Activated CD8-positive, alpha-beta T cell treated with anti-CD3 and anti-CD28 coated beads for 36 hours (primary cell): ENCODE measurements at regions of chr11 and their contacts with region 1.

Region 1: DNA sequence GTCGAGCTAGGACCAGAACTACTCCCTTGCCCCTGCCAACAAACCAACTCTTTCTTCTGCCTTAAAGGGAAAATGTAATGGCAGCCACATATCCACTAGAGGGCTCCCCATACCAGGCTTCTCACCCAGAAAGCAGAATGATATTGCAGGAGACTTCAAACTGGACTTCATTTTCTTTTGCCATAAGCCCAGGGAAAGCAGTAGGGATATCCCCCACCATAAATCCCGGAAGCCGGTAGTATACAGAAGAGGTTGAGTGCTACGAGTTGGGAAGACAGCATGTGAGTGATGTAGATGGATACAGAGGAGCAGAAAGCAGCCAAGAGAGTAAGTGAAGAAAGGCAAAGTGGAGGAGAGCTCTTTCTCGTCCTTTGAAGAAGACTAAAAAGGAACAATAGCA is 12.1 kb downstream of the PLAAT5 start:
- DNase-seq: peak; percentile 57
- ATAC-seq: peak; percentile 86
- H3K4me3 Mint-ChIP-seq: no peak overlapping the region
- H3K27ac Mint-ChIP-seq: no peak overlapping the region
- H3K4me1 Mint-ChIP-seq: no peaks in the 10 kb centered on the region
- H3K27me3 Mint-ChIP-seq: no peaks in the 10 kb centered on the region
- CTCF ChIP-seq: peak; percentile 85

Region 2: DNA sequence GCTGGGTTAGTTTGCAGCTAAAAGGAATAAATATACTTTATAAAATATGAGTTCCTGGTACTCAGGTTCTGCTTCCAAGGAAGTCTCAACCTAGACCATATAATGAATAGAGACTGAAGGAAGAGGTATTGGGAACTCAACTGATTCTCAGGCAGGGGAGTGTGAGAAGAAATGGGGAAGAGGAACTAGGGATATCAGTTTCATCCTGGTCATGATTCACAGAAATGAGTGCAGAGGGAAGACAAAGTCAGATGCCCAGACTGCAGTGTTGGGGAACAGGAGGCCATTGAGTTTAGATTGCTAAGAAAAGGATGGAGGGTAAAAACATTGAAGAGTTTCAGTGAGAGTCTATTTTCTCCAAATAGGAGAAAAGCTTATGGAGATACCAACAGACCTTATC is 16.8 kb before region 1 on chr11:
- CTCF ChIA-PET with region 1: interaction called, 13 read pairs
- POLR2A ChIA-PET with region 1: no interaction called
- intact Hi-C with region 1: no loop called
- DNase-seq: no peak
- ATAC-seq: no peak
- H3K4me3 Mint-ChIP-seq: no peak overlapping the region
- H3K27ac Mint-ChIP-seq: no peak overlapping the region
- H3K4me1 Mint-ChIP-seq: no peaks in the 10 kb centered on the region
- H3K27me3 Mint-ChIP-seq: peaks cover 6% of the 10 kb centered on the region
- CTCF ChIP-seq: no peak

Region 3: DNA sequence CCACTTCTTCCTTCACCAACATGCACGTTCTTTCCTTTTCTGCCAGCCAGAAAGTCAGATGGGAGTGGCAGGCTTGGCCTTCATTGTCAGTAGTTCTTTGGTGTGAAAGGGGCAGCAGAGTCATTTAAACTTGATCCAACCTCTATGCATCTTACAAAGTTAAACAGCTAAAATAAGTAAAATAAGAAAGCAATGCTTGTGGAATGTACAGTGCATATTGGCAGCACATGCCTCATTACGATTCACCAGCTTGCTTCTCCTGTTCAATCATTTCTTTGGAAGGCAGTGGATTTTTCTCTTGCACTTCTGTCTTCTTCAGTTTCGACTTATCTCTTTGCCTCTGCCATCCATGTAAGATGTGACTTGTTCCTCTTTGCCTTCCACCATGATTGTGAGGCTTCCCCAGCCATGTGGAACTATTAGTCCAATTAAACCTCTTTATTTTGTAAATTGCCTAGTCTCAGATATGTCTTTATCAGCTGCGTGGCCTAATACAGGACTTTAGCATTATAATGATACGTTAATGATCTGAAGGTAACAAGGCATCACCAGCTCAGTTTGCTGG is 41.8 kb after region 1 on chr11:
- CTCF ChIA-PET with region 1: interaction called, 11 read pairs
- POLR2A ChIA-PET with region 1: no interaction called
- intact Hi-C with region 1: no loop called
- DNase-seq: no peak
- ATAC-seq: no peak
- H3K4me3 Mint-ChIP-seq: no peak overlapping the region
- H3K27ac Mint-ChIP-seq: no peak overlapping the region
- H3K4me1 Mint-ChIP-seq: peaks cover 11% of the 10 kb centered on the region
- H3K27me3 Mint-ChIP-seq: no peaks in the 10 kb centered on the region
- CTCF ChIP-seq: no peak

Region 4: DNA sequence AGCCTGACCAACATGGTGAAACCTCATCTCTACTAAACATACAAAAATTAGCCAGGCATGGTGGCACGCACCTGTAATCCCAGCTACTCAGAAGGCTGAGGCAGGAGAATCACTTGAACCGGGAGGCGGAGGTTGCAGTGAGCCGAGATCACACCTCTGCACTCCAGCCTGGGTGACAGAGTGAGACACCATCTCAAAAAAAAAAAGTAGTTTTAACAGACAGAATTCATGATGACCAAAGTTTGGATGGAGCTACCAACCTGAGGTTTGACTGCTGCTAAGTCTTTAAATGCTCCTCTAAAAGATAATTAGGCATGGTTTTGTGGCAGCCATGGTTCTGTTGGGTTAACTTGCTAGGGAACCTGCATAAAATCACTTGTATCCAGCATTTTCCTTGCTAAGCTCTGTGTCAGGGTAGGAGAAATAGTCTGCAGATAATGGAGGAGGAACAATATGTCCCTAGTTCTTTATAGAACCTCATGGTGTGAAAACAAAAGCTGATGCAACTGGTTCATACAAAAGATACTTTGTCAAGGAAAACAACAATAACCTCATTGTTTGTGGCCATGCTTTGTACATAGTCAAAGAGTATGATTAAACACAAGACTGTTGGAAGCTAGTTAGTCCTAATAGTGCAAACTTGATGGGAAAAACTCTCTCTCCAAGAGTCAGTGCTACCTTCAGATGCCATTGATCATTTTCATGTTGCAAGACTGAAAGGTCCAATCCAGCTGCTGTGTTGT is 104.2 kb after region 1 on chr11:
- CTCF ChIA-PET with region 1: interaction called, 10 read pairs
- POLR2A ChIA-PET with region 1: no interaction called
- intact Hi-C with region 1: no loop called
- DNase-seq: no peak
- ATAC-seq: no peak
- H3K4me3 Mint-ChIP-seq: no peak overlapping the region
- H3K27ac Mint-ChIP-seq: peak overlapping the region; percentile 47
- H3K4me1 Mint-ChIP-seq: peaks cover 14% of the 10 kb centered on the region
- H3K27me3 Mint-ChIP-seq: no peaks in the 10 kb centered on the region
- CTCF ChIP-seq: no peak

Region 5: DNA sequence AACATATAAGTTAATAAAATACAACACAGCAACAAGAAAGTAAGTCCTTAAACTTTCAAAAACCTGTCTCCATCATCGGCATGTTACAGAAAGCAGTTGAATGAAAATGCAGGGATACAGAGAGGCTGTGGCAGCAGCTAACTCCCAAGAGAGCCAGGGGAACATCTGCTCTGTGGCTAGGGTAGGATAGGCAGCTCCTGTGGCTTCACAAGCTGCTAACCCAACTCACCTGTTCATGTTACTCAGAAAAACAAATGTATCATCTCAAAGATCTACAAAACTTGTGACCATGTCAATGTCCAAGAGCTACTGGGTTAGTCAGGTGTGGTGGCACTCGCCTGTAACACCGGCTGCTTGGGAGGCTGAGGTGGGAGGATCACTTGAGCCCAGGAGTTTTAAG is 150.5 kb after region 1 on chr11:
- CTCF ChIA-PET with region 1: interaction called, 55 read pairs
- POLR2A ChIA-PET with region 1: interaction called, 4 read pairs
- intact Hi-C with region 1: no loop called
- DNase-seq: no peak
- ATAC-seq: no peak
- H3K4me3 Mint-ChIP-seq: no peak overlapping the region
- H3K27ac Mint-ChIP-seq: no peak overlapping the region
- H3K4me1 Mint-ChIP-seq: peaks cover 16% of the 10 kb centered on the region
- H3K27me3 Mint-ChIP-seq: no peaks in the 10 kb centered on the region
- CTCF ChIP-seq: no peak

Region 6: GRCh38 chr11:63652671-63653070 is 173.8 kb after region 1 on chr11:
- CTCF ChIA-PET with region 1: interaction called, 10 read pairs
- POLR2A ChIA-PET with region 1: no interaction called
- intact Hi-C with region 1: no loop called
- DNase-seq: no peak
- ATAC-seq: no peak
- H3K4me3 Mint-ChIP-seq: no peak overlapping the region
- H3K27ac Mint-ChIP-seq: no peak overlapping the region
- H3K4me1 Mint-ChIP-seq: peaks cover 8% of the 10 kb centered on the region
- H3K27me3 Mint-ChIP-seq: no peaks in the 10 kb centered on the region
- CTCF ChIP-seq: no peak